Calu3 (cell line): ENCODE measurements at regions of chr2 and their contacts with region 1.

Region 1: DNA sequence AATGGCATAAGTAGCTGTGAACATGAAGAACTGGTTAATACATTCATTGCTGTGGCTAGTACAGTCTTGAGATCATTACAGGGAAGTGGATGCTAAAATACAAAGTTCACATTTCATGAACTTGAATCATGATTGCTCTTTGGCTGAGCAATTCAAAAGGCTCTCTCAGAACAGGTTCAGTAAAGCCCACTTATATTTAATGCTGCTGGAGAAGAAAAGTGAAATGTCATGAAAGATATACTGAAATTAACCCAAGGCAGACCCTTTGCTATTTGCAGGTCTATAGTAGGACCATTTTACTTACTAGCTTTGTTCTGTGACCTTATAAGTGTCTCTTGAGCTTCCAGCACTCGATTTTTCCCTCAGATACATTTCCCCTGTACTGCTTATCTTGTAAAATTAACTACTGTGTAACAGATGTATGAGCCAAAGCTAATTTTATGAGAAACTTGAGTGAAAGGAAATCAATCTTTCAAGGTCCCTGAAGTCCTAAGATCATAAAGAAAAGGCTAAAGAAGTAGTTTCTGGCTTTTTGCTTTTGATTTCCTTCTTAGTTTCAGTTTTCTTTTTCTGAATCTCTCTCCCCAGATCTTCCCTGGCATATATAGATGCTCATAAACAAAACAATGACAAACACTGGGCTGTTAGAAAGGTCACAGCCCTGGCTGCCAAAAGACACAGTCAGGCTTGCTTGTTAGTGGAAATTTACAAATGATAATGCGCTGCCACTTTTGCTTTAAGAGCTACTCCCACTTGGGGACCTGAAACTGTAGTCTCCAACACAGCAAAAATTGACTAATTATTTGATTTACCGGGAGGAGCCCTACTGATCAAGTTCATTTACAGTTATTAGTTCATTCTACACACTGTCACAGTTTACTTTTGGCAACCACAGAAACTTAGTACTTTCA is 132.7 kb upstream of the XPO1 start:
- DNase-seq: no peak
- H3K4me3 Mint-ChIP-seq: peak overlapping the region; percentile 57
- H3K27ac Mint-ChIP-seq: peak overlapping the region; percentile 97
- H3K4me1 Mint-ChIP-seq: peaks cover 45% of the 10 kb centered on the region
- H3K27me3 Mint-ChIP-seq: no peaks in the 10 kb centered on the region
- CTCF ChIP-seq: no peak

Region 2: DNA sequence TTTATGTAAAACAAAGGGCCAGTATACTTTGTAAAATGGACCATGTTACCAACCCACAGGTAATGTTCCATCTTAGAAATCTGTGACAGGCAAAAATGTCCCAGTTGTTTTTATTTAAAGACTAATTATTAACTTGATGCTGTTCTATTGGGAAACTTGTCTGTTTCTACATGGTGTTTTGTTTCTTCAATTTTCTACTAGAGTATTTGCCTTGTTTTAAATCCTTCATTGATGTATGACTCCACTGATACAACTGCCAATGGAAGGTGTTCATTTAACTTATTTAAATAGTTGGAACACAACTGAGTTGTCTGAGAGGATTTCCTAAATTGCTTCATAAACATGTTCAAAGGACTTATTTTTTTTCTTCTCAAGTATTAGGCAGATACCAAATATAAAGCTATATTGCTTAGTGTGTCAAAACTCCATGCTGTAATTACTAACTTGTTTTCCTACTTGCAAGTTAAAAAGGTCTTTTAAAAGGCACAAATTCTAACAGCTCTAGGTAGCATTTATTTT is 19.3 kb after region 1 on chr2:
- CTCF ChIA-PET with region 1: no interaction called
- intact Hi-C with region 1: loop called (anchors 2 kb)
- DNase-seq: no peak
- H3K4me3 Mint-ChIP-seq: no peak overlapping the region
- H3K27ac Mint-ChIP-seq: no peak overlapping the region
- H3K4me1 Mint-ChIP-seq: peaks cover 7% of the 10 kb centered on the region
- H3K27me3 Mint-ChIP-seq: no peaks in the 10 kb centered on the region
- CTCF ChIP-seq: no peak

Region 3: GRCh38 chr2:61789807-61790602 is 119.2 kb after region 1 on chr2:
- CTCF ChIA-PET with region 1: interaction called, 3 read pairs
- intact Hi-C with region 1: loop called (anchors 10 kb)
- DNase-seq: no peak
- H3K4me3 Mint-ChIP-seq: no peak overlapping the region
- H3K27ac Mint-ChIP-seq: no peak overlapping the region
- H3K4me1 Mint-ChIP-seq: peaks cover 8% of the 10 kb centered on the region
- H3K27me3 Mint-ChIP-seq: no peaks in the 10 kb centered on the region
- CTCF ChIP-seq: no peak